CD4-positive, alpha-beta T cell (primary cell): ENCODE measurements at regions of chr3 and their contacts with region 1.

Region 1: DNA sequence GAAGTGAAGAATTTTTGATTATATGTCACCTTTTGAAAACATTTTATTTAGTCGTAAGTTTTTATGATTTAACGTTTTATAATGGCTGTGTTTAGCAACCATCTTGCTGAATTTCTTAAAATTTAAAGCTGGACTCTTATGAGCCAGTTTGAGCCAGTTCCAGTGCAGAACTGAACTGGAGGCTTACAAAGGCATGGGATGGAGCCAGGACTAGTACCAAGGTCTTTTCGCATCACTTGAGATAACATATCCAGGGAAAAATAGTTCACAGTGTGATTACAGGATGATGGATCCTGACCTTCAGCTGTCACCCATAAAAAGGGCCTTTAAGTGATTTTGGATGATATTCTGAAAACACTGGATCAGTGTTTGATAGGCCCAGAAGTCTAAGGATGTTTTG is 51.0 kb downstream of the USP13 start:
- DNase-seq: no peak
- ATAC-seq: no peak
- H3K4me3 ChIP-seq: no peak overlapping the region
- H3K4me3 Mint-ChIP-seq: no peak overlapping the region
- H3K27ac ChIP-seq: no peak overlapping the region
- H3K27ac Mint-ChIP-seq: no peak overlapping the region
- H3K4me1 ChIP-seq: no peaks in the 10 kb centered on the region
- H3K4me1 Mint-ChIP-seq: no peaks in the 10 kb centered on the region
- H3K27me3 ChIP-seq: no peaks in the 10 kb centered on the region
- H3K27me3 Mint-ChIP-seq: no peaks in the 10 kb centered on the region
- CTCF ChIP-seq: no peak

Region 2: GRCh38 chr3:179486806-179487205 is 217.0 kb before region 1 on chr3:
- CTCF ChIA-PET with region 1: no interaction called
- POLR2A ChIA-PET with region 1: no interaction called
- intact Hi-C with region 1: no loop called
- DNase-seq: no peak
- ATAC-seq: no peak
- H3K4me3 ChIP-seq: no peak overlapping the region
- H3K4me3 Mint-ChIP-seq: no peak overlapping the region
- H3K27ac ChIP-seq: no peak overlapping the region
- H3K27ac Mint-ChIP-seq: no peak overlapping the region
- H3K4me1 ChIP-seq: no peaks in the 10 kb centered on the region
- H3K4me1 Mint-ChIP-seq: no peaks in the 10 kb centered on the region
- H3K27me3 ChIP-seq: peaks cover 2% of the 10 kb centered on the region in 2 experiments
- H3K27me3 Mint-ChIP-seq: peaks cover 12% of the 10 kb centered on the region
- CTCF ChIP-seq: no peak

Region 3: DNA sequence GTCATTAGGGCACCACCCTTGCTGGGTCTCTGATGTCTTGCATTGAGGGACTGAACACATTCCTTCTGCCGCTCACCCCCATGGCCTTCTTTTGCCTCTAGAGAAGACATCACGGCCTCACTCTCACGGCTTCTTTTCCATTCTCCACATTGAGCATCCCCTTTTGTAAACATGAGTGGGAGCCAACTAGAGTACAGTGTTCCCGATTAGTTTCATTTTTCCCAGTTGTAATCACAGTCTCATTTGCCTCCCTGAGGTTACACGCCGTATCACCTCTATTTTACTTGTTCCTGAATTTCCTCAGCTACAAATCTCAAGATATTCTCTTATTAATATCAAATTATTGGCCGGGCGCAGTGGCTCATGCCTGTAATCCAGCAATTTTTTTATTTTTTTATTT is 33.5 kb before region 1 on chr3:
- CTCF ChIA-PET with region 1: no interaction called
- POLR2A ChIA-PET with region 1: no interaction called
- intact Hi-C with region 1: loop called in 1 of 2 experiments (anchors 1 kb)
- DNase-seq: no peak
- ATAC-seq: no peak
- H3K4me3 ChIP-seq: no peak overlapping the region
- H3K4me3 Mint-ChIP-seq: no peak overlapping the region
- H3K27ac ChIP-seq: no peak overlapping the region
- H3K27ac Mint-ChIP-seq: no peak overlapping the region
- H3K4me1 ChIP-seq: no peaks in the 10 kb centered on the region
- H3K4me1 Mint-ChIP-seq: peaks cover 12% of the 10 kb centered on the region
- H3K27me3 ChIP-seq: no peaks in the 10 kb centered on the region
- H3K27me3 Mint-ChIP-seq: no peaks in the 10 kb centered on the region
- CTCF ChIP-seq: no peak

Region 4: DNA sequence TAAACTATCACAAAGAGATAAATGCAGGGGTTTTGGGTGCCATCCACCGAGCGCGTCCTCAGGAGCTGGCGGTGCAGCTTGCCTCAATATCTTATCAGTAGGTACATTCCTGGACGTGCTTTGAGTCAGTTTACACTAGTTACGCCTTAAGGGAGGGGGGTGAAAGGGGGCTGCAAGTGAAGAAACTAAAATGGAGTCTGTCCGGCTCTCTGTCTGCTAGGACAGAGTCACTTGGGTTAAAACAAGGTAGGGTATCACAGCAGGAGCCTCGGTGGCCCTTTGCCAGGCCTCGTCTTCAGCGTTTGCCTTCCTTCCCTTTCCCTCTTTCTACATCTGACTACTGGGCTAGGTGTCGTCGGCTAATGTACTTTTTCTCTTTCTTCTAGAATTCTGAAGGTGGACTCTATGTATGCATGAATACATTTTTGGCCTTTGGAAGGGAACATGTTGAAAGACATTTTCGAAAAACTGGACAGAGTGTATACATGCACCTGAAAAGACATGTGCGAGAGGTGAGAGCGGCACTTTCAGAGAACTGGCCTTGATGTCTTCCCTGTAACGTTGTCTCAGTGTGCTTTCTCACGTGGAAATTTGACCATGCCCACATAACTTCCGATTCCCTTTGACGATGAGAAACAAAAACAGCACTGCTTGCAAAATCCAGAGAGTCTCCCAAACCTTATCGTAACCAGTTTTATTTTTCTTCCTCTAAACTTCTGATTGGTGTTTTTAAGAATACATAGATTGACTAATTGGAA is 22.1 kb before region 1 on chr3:
- CTCF ChIA-PET with region 1: no interaction called
- POLR2A ChIA-PET with region 1: no interaction called
- intact Hi-C with region 1: no loop called
- DNase-seq: no peak
- ATAC-seq: no peak
- H3K4me3 ChIP-seq: no peak overlapping the region
- H3K4me3 Mint-ChIP-seq: no peak overlapping the region
- H3K27ac ChIP-seq: no peak overlapping the region
- H3K27ac Mint-ChIP-seq: no peak overlapping the region
- H3K4me1 ChIP-seq: no peaks in the 10 kb centered on the region
- H3K4me1 Mint-ChIP-seq: no peaks in the 10 kb centered on the region
- H3K27me3 ChIP-seq: no peaks in the 10 kb centered on the region
- H3K27me3 Mint-ChIP-seq: no peaks in the 10 kb centered on the region
- CTCF ChIP-seq: no peak